GM13976 (cell line): ENCODE measurements at regions of chr19 and their contacts with region 1.

Region 1: DNA sequence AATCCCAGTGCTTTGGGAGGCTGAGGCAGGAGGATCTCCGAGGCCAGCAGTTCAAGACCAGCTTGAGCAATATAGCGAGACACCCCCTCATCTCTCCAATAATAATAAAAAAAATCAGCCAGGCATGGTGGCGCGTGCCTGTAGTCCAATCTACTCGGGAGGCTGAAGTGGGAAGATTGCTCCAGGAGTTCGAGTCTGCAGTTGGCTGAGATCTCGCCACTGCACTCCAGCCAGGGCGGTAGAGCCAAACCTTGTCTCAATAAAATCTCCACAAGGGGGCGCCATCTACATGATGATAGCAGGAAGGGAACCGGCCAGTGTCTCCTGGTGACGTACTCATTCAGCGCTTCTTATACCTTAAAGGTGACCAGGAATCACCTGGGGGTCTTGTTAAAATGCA is 13.6 kb upstream of the C5AR1 start:
- DNase-seq: peak; percentile 81
- CTCF ChIP-seq: peak; percentile 81

Region 2: DNA sequence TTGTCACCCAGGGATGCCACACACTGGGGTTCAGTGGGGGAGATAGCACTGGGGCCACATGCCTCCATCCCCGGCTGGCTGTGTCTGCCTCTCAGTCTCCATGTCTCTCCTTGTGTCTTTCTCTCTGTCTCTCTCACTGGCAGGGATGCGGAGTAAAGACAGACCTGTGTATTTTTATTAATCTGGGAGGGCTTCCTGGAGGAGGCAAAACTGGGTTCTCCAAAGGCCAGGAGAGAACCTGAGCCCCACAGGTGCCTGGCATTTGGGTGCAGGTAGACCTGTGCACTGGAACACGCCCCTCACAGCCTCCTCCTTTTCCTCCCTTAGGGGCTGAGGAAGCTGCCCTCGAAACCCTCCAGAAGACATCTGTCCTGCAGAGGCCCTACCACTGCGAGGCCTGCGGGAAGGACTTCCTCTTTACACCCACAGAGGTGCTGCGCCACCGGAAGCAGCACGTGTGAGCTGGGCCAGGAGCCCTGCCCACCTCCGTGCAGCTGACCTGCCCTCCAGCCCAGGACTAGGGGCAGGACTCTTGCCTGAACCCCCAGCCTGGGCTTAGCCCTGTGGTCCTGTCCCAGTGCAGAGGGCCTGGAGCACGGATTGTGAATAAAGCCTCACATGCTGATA is 85.7 kb after region 1 on chr19:
- in situ Hi-C with region 1: loop called (anchors 10 kb)
- DNase-seq: peak; percentile 61
- CTCF ChIP-seq: no peak

Region 3: DNA sequence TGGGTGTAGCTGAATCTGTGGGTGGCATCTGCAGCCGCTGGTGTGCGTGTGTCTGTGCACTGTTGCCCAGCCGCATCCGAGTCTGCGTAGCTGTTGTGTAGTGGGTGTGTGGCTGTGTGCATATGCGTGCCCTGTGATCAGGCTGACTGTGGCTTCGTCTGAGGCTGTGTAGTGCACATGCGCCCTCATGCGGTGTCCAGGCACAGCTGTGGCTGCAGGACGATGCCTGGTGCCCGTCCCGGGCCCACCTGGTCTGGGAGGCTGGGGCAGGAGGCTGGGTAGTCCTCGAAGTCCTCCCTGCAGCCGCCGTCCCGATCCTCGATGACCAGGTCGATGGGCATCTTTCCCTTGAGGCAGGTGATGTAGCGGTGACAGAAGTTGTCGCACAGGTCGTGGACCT is 118.4 kb after region 1 on chr19:
- in situ Hi-C with region 1: loop called (anchors 10 kb)
- DNase-seq: no peak
- CTCF ChIP-seq: no peak

Region 4: DNA sequence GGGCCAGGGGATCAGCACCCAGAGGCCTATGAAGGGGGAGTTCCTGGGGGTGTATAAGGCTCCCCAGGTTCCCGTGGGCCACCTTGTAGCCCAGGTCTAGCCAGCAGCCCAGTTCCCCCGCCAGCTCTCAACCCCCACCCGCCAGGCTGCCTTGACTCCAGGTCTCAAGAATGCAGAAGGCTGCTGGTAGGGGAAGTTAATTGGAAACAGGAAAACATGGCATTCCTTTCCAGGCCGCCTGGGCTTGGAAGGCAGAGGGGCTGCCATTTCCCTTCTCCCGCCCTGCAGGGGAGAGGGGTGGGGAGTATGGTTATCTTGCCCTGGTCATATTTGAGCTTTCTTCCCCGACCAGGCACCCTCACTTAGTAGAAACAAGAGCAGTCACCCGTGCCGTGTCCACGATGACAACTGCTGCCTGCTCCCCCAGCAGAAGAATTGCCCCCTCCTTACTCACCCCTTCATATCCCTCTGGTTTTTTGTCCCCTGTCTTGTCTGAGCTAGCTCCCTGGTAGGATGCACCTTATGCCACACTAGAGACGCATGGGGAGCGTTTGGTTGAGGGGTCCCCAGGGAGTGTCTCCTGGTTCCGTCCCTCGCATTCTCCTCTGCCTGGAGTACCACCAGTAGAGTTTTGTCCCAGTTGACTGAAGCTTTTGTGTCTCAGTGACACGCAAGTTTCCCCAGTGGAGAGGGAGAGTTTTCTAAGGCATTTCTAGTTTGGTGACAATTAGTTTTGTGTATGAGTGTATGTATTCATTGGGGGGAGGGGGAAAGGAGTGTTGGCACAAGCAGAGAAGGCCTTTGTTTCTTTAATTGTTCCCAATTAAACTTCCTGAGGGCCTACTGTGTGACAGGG is 317.4 kb after region 1 on chr19:
- in situ Hi-C with region 1: no loop called
- DNase-seq: no peak
- CTCF ChIP-seq: no peak

Region 5: GRCh38 chr19:47707135-47707925 is 411.3 kb after region 1 on chr19:
- in situ Hi-C with region 1: loop called (anchors 10 kb)
- DNase-seq: peak; percentile 82
- CTCF ChIP-seq: peak; percentile 73